Activated T-helper 2 cell treated with anti-CD3 and anti-CD28 coated beads, Interferon-gamma antibody, Interleukin-2, Interleukin-4, amounts not matched to agents 10 μg/mL and 5 μg/mL and 100 μg/mL, durations not matched to agents 14 hours and 24 hours and 36 hours (primary cell): ENCODE measurements at regions of chr2 and their contacts with region 1.

Region 1: DNA sequence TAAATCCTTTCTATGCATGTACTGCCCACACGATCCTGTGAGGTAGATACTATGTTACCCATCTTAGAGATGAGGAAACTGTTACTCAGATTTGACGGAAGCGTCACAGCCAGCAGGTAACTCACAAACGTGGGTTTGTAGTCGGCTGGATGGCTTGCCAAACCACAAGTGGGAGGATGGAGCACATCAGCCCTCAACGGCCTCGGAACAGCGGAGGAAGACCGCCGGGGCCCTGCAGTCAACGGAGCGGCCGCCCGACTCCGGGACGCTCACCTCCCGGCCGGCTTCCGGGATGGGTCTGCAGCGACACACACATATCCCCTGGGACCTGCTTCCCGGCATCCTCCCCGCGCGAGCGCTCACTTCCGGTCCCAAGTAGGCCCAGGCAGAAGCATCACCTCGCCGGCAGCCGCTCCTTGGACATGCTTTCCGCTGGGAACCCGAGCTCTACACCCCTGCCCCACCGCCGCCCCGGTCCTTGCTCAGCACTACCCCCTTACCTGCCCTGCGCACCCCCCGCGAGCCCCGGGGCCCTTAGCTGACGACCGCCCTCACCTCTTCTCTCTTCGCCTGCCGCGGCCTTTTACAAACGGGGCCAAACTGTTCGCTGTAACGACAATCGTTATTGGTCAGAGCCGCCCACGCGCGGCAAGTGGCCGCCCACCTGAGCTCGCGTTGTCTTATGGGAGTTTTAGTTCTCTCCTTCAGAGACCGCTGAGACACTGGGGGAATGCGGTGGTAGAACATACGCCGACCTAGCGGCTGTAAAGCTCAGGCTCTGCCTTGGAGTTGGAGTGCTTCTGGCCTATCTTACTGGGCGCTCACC is at the start of gene C2orf42:
- DNase-seq: peak; percentile 94
- H3K4me3 Mint-ChIP-seq: peak within 1 kb of the TSS; percentile 96
- H3K27ac Mint-ChIP-seq: peak within 1 kb of the TSS; percentile 98
- H3K4me1 Mint-ChIP-seq: peaks cover 18% of the 10 kb centered on the region
- H3K27me3 Mint-ChIP-seq: peaks cover under 1% of the 10 kb centered on the region
- total RNA-seq, gene C2orf42: 22.1 and 24.7 TPM in 2 replicates

Region 2: DNA sequence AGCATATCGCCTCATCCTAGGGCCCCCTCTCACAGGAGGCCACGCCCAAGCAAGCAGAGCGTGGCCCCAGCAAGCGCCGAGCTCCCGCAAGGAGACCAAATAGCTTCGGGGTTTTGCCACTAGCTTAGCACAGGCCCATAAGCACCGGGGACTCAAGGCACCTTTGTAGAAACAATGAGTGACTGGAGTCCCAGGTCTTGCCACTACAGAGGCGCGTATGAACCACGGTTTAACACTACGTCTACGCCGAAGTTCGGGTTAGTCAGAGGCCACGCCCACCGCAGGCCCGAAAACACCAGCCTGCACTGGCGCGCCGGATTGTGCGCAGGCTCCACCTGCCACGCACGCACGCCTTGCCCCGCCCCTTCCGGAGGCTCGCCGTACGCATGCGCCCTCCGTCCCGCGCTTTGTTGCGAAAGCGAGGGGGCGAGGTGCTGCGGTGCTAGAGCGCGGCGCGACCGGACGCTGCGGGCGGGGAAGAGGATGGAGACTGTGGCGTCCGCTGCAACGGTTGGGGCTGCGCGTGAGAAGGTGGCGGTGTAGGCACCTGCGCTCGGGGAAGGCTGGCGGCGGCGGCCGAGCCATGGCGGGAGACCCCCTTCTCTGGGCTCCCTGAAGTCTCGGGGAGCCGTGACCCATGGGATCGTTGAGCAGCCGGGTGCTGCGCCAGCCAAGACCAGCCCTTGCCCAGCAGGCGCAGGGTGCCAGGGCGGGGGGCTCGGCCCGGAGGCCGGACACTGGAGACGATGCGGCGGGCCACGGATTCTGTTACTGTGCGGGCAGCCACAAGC is 361.2 kb before region 1 on chr2 and contains the start of gene GMCL1:
- intact Hi-C with region 1: loop called (anchors 1 kb)
- DNase-seq: peak; percentile 99
- H3K4me3 Mint-ChIP-seq: peak within 1 kb of the TSS; percentile 84
- H3K27ac Mint-ChIP-seq: peak within 1 kb of the TSS; percentile 93
- H3K4me1 Mint-ChIP-seq: peaks cover 42% of the 10 kb centered on the region
- H3K27me3 Mint-ChIP-seq: no peaks in the 10 kb centered on the region
- total RNA-seq, gene GMCL1: 29.2 and 29.3 TPM in 2 replicates

Region 3: DNA sequence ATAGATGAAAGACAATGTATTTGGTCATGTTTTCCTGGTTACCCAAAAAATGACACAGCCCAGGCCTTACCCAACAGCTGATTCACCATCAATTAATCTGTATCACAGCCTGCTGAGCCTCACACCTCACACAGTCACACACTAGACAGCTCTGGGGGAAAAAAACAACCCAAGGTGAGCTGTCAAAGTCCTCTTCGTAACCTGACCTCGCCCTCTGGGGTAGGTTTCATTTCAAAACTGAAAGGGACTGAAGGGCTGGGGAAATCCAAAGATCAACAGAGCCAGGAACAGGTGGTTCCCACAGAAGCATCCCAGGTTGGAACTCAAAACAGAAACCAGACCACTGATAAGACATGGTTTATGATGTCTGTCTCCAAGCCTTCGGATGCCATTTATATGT is 121.6 kb before region 1 on chr2:
- intact Hi-C with region 1: loop called (anchors 1 kb)
- DNase-seq: peak; percentile 75
- H3K4me3 Mint-ChIP-seq: no peak overlapping the region
- H3K27ac Mint-ChIP-seq: peak overlapping the region; percentile 86
- H3K4me1 Mint-ChIP-seq: peaks cover 41% of the 10 kb centered on the region
- H3K27me3 Mint-ChIP-seq: no peaks in the 10 kb centered on the region

Region 4: GRCh38 chr2:70248181-70248847 is 57.7 kb after region 1 on chr2 and contains the start of gene TIA1:
- intact Hi-C with region 1: loop called (anchors 1 kb)
- DNase-seq: peak; percentile 98
- H3K4me3 Mint-ChIP-seq: peak within 1 kb of the TSS; percentile 95
- H3K27ac Mint-ChIP-seq: peak within 1 kb of the TSS; percentile 98
- H3K4me1 Mint-ChIP-seq: peaks cover 22% of the 10 kb centered on the region
- H3K27me3 Mint-ChIP-seq: no peaks in the 10 kb centered on the region
- total RNA-seq, gene TIA1: 113 TPM in 2 replicates

Region 5: DNA sequence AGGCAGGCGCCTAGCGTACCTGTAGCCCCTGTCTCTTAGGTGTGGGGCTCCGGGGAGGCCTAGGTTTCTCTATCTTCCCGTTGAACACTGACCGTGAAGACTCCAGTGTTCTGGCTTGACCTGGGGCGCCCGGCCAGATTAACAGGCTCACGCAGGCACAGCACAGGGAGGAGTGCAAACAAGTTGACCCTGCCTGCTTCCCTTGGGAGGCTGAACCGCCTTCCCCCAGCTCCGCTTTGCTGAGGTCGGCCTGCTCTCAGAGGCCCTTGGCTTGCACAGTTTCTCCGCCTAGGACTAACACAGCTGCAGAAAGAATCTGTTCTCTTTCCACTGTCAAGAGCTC is 67.9 kb after region 1 on chr2:
- intact Hi-C with region 1: loop called (anchors 2 kb)
- DNase-seq: no peak
- H3K4me3 Mint-ChIP-seq: peak overlapping the region; percentile 94
- H3K27ac Mint-ChIP-seq: no peak overlapping the region
- H3K4me1 Mint-ChIP-seq: peaks cover 32% of the 10 kb centered on the region
- H3K27me3 Mint-ChIP-seq: no peaks in the 10 kb centered on the region